Panc1 (cell line): ENCODE measurements at regions of chr7 and their contacts with region 1.

Region 1: GRCh38 chr7:76201730-76202665 is at the start of gene SRRM3:
- DNase-seq: no peak
- ATAC-seq: peak; percentile 94
- H3K4me3 ChIP-seq: peak within 1 kb of the TSS; percentile 35 to 37; a peak in 3 of 4 replicates
- H3K27ac ChIP-seq: no peak within 1 kb of the TSS
- H3K4me1 ChIP-seq: no peaks in the 10 kb centered on the region
- H3K27me3 ChIP-seq: peaks cover 4% of the 10 kb centered on the region; the same call in 1 of the 2 replicates
- CTCF ChIP-seq: peak; percentile 93
- total RNA-seq, gene SRRM3: 8.5 TPM

Region 2: GRCh38 chr7:76241141-76241540 is 39.1 kb after region 1 on chr7:
- CTCF ChIA-PET with region 1: interaction called, 5 read pairs
- POLR2A ChIA-PET with region 1: interaction called, 11 read pairs
- in situ Hi-C with region 1: no loop called
- intact Hi-C with region 1: no loop called
- DNase-seq: no peak
- ATAC-seq: no peak
- H3K4me3 ChIP-seq: no peak overlapping the region
- H3K27ac ChIP-seq: no peak overlapping the region
- H3K4me1 ChIP-seq: peaks cover 3% of the 10 kb centered on the region; the same call in 1 of the 2 replicates
- H3K27me3 ChIP-seq: no peaks in the 10 kb centered on the region
- CTCF ChIP-seq: no peak